CD4-positive, alpha-beta memory T cell (primary cell): ENCODE measurements at regions of chr19 and their contacts with region 1.

Region 1: DNA sequence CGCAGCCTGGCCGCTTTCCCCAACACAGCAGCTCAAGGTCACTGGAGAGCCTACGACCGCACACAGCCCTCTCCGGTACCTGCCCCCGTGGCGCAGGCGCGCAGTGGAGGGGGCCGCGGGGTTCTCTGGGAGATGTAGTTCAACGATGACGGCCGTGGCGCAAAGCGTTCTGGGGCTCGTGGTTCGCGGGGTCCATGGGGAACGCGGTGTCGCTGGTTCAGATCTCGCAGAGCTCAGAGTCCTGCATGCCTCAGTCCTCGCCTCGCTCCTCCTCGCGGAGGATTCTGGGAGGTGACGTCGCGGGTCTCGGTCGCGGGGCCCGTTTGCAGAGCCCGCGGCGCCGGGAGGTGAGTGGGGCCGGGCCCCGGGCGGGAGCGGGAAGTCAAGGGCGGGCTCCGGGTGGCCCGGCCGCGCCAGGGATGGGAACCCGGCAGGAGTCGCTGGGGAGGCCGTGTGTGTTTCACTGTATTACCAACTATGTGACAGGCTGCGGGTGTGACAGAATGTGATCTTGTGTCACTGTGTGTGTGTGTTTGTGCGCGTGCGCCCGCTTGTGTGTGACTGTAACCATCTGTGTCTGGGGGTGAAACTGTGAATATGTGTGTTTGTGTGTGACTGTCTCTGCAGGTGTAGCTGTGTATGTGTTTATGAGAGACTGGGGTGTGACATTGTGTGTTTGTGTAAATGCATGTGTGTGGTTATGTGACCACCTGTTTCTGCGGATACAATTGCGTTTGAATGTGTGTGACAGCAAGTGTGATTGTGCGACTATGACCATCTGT is at the start of gene ZNF527:
- DNase-seq: peak; percentile 96 to 98 (median 97)
- H3K4me3 ChIP-seq: peak within 1 kb of the TSS; percentile 63 to 86
- H3K4me3 Mint-ChIP-seq: peak within 1 kb of the TSS; percentile 97 to 100 (median 98)
- H3K27ac ChIP-seq: peak within 1 kb of the TSS; percentile 78
- H3K27ac Mint-ChIP-seq: peak within 1 kb of the TSS; percentile 97 to 99 (median 98)
- H3K4me1 ChIP-seq: peaks cover 7% of the 10 kb centered on the region
- H3K4me1 Mint-ChIP-seq: peaks cover 9 to 28% (median 16%) of the 10 kb centered on the region in 4 donors
- H3K27me3 ChIP-seq: no peaks in the 10 kb centered on the region
- H3K27me3 Mint-ChIP-seq: no peaks in the 10 kb centered on the region
- total RNA-seq, gene ZNF527: 12.7 to 13.3 TPM

Region 2: DNA sequence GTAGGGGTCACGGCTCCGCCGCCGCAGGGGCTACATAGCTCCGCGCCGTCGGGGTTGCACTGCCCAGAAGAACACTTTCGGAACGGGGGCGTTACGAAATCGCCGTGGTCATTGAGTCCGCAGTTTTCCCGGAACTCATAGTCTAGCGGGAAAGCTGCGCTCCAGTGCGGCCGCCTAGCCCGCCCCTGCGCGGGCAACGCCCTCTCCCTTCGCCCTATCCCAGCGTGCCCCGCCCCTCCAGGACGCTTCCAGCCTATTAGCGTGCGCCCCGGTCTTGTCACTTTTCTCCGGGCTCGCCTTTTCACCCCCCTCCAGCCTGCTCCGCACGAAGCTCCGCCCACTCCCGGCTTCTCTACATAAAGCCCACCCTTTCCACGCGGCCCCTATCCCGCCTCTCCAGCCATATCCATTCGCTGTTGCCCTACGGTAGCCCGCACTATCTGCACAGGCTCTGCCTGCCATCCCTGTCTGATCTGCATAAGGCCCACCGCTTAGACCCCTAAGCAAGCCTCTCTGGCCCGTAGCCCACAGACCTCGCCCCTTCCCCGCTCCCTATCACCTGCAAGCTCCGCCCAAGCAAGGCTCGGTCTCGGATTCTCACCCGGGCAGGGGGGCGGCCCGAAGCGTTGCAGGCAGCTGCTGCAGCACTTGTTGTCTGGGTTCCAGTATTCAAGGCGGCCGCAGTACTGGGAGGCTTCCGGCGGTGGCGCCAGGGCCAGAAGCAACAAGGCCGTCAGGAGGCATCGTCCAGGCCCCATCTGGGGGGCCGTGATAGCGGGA is 1630.5 kb before region 1 on chr19:
- CTCF ChIA-PET with region 1: no interaction called
- POLR2A ChIA-PET with region 1: no interaction called
- intact Hi-C with region 1: loop called (anchors 10 kb)
- DNase-seq: peak; percentile 90 to 97 (median 91)
- H3K4me3 ChIP-seq: peak overlapping the region; percentile 83 to 88
- H3K4me3 Mint-ChIP-seq: peak overlapping the region; percentile 88 to 98 (median 90)
- H3K27ac ChIP-seq: peak overlapping the region; percentile 77
- H3K27ac Mint-ChIP-seq: peak overlapping the region; percentile 93 to 99 (median 94)
- H3K4me1 ChIP-seq: peaks cover 59% of the 10 kb centered on the region
- H3K4me1 Mint-ChIP-seq: peaks cover 17 to 65% (median 42%) of the 10 kb centered on the region in 4 donors
- H3K27me3 ChIP-seq: no peaks in the 10 kb centered on the region
- H3K27me3 Mint-ChIP-seq: no peaks in the 10 kb centered on the region

Region 3: DNA sequence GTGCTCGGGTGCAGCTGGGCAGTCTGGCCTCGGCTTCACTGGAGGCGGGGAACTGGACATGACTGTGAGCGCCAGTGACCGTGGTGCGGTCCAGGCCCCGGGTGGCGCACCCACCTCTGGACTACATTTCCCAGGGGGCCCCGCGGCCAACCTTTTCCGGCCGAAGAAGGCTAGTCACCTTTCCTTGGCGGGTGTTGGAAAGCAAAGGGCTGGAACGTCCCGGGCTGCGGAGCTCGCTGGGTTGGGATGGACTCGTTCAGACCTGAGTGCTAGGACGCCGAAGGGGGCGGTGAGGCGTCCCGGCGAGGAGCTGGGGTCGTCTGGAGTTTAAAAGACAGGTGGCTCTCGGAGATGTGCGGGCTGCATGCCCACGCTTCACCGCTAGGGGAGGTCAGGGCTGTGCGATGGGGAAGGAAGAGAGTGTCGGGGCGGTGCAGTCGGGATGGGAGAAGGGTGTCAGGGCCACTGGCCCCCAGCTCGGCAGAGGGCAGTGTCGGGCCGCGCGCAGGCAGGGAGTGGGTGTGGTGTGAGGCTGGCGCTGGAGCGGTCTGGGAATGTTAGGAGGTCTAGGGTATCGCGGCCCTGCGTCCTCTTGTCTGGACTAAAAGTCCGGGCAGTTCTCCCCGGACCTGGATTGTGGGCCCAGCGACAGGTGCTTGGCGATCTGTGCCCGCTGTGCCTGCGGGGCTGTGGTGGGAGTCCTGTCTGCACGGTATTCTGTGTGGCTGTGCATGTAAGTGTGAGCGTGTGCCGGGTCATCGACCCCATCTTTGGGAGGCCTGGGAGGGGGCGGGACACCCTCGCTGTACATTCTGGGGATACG is 397.8 kb before region 1 on chr19:
- CTCF ChIA-PET with region 1: interaction called, 3 read pairs
- POLR2A ChIA-PET with region 1: no interaction called
- intact Hi-C with region 1: loop called (anchors 1 kb)
- DNase-seq: peak; percentile 76 to 85 (median 77)
- H3K4me3 ChIP-seq: peak overlapping the region; percentile 80 to 86
- H3K4me3 Mint-ChIP-seq: peak overlapping the region; percentile 91 to 98 (median 96)
- H3K27ac ChIP-seq: peak overlapping the region; percentile 68
- H3K27ac Mint-ChIP-seq: peak overlapping the region; percentile 82 to 97 (median 94)
- H3K4me1 ChIP-seq: peaks cover 16% of the 10 kb centered on the region
- H3K4me1 Mint-ChIP-seq: peaks cover 8 to 22% (median 12%) of the 10 kb centered on the region in 4 donors
- H3K27me3 ChIP-seq: no peaks in the 10 kb centered on the region
- H3K27me3 Mint-ChIP-seq: no peaks in the 10 kb centered on the region

Region 4: GRCh38 chr19:37217855-37218591 is 153.0 kb before region 1 on chr19 and contains the start of gene ZNF383:
- CTCF ChIA-PET with region 1: no interaction called
- POLR2A ChIA-PET with region 1: interaction called, 12 read pairs
- intact Hi-C with region 1: loop called (anchors 2 kb)
- DNase-seq: peak; percentile 80 to 87 (median 83)
- H3K4me3 ChIP-seq: peak within 1 kb of the TSS; percentile 85 to 99
- H3K4me3 Mint-ChIP-seq: peak within 1 kb of the TSS; percentile 89 to 98 (median 91)
- H3K27ac ChIP-seq: peak within 1 kb of the TSS; percentile 80
- H3K27ac Mint-ChIP-seq: peak within 1 kb of the TSS; percentile 88 to 98 (median 96)
- H3K4me1 ChIP-seq: peaks cover 16% of the 10 kb centered on the region
- H3K4me1 Mint-ChIP-seq: peaks cover 19 to 40% (median 31%) of the 10 kb centered on the region in 4 donors
- H3K27me3 ChIP-seq: no peaks in the 10 kb centered on the region
- H3K27me3 Mint-ChIP-seq: no peaks in the 10 kb centered on the region
- total RNA-seq, gene ZNF383: 32.0 to 34.0 TPM

Region 5: GRCh38 chr19:37594304-37594981 is 223.4 kb after region 1 on chr19 and contains the starts of genes ZNF540 and ZNF571:
- CTCF ChIA-PET with region 1: no interaction called
- POLR2A ChIA-PET with region 1: interaction called, 29 read pairs
- intact Hi-C with region 1: loop called (anchors 1 kb)
- DNase-seq: peak; percentile 88 to 96 (median 92)
- H3K4me3 ChIP-seq: peak within 1 kb of the TSS; percentile 91 to 92
- H3K4me3 Mint-ChIP-seq: peak within 1 kb of the TSS; percentile 94 to 99 (median 97)
- H3K27ac ChIP-seq: peak within 1 kb of the TSS; percentile 98
- H3K27ac Mint-ChIP-seq: peak within 1 kb of the TSS; percentile 97 to 99 (median 99)
- H3K4me1 ChIP-seq: peaks cover 24% of the 10 kb centered on the region
- H3K4me1 Mint-ChIP-seq: peaks cover 21 to 47% (median 30%) of the 10 kb centered on the region in 4 donors
- H3K27me3 ChIP-seq: no peaks in the 10 kb centered on the region
- H3K27me3 Mint-ChIP-seq: no peaks in the 10 kb centered on the region
- total RNA-seq, gene ZNF540: 24.2 to 24.5 TPM
- total RNA-seq, gene ZNF571: 10.1 to 14.2 TPM

Region 6: DNA sequence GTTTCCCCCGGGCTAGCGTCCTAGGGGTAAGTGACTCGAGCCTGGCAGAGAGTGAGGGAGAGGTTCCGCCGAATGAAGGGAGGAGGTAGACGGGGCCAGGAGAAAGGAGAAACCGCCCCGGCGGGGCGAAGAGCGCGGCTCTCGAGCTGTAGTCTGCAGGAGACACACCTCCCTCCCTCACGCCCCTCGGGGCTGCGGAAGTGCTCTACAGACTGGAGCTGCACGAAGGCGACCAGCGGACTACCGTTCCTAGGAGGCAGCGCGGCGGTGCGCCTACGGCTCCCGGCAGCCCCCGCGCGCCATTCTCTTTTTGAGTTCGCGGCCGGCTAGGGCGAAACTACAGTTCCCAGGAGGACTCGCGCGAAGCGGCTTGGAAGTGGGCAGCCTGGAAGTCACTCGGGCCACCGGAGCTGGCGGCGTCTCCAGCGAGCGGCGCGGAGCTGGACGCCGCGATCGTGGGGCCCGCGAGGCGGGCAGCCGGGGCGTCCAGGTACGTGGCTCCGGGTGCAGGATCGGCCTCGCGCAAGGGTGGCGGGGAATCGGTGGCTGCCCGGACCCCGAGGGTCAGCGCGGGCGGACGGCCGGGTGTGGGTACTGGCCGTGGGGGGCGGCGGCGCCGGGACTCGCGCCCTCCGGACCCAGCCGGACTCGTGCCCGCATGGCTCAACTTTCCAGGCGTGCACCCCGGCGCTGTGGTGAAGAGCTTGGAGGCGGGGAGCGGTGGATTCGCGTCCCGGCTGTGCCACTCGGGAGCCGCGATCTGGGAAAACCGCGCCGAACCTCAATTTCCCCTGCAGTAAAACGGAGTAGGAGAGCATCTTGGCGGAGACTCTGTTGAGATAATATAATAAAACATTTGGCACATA is 536.0 kb after region 1 on chr19 and contains the start of gene SIPA1L3:
- CTCF ChIA-PET with region 1: no interaction called
- POLR2A ChIA-PET with region 1: interaction called, 6 read pairs
- intact Hi-C with region 1: loop called (anchors 1 kb)
- DNase-seq: peak; percentile 89 to 92 (median 90)
- H3K4me3 ChIP-seq: peak within 1 kb of the TSS; percentile 63 to 96
- H3K4me3 Mint-ChIP-seq: peak within 1 kb of the TSS; percentile 92 to 96 (median 93)
- H3K27ac ChIP-seq: peak within 1 kb of the TSS; percentile 71
- H3K27ac Mint-ChIP-seq: peak within 1 kb of the TSS; percentile 86 to 95 (median 91)
- H3K4me1 ChIP-seq: peaks cover 22% of the 10 kb centered on the region
- H3K4me1 Mint-ChIP-seq: peaks cover 16 to 36% (median 25%) of the 10 kb centered on the region in 4 donors
- H3K27me3 ChIP-seq: no peaks in the 10 kb centered on the region
- H3K27me3 Mint-ChIP-seq: no peaks in the 10 kb centered on the region
- total RNA-seq, gene SIPA1L3: 31.8 to 35.0 TPM